Activated CD4-positive, alpha-beta T cell treated with anti-CD3 and anti-CD28 coated beads for 36 hours (primary cell): ENCODE measurements at regions of chr2 and their contacts with region 1.

Region 1: GRCh38 chr2:216013080-216013909 is at the start of gene MREG:
- DNase-seq: peak; percentile 94
- ATAC-seq: peak; percentile 70
- H3K4me3 Mint-ChIP-seq: peak within 1 kb of the TSS; percentile 88
- H3K27ac Mint-ChIP-seq: peak within 1 kb of the TSS; percentile 81
- H3K4me1 Mint-ChIP-seq: peaks cover 60% of the 10 kb centered on the region
- H3K27me3 Mint-ChIP-seq: no peaks in the 10 kb centered on the region
- total RNA-seq, gene MREG: 9.1 to 9.8 TPM

Region 2: GRCh38 chr2:214809751-214810564 is 1203.3 kb before region 1 on chr2:
- CTCF ChIA-PET with region 1: no interaction called
- POLR2A ChIA-PET with region 1: no interaction called
- intact Hi-C with region 1: loop called in 1 of 2 experiments (anchors 10 kb)
- DNase-seq: peak; percentile 100
- ATAC-seq: peak; percentile 89
- H3K4me3 Mint-ChIP-seq: peak overlapping the region; percentile 88
- H3K27ac Mint-ChIP-seq: peak overlapping the region; percentile 73
- H3K4me1 Mint-ChIP-seq: peaks cover 23% of the 10 kb centered on the region
- H3K27me3 Mint-ChIP-seq: peaks cover 3% of the 10 kb centered on the region

Region 3: DNA sequence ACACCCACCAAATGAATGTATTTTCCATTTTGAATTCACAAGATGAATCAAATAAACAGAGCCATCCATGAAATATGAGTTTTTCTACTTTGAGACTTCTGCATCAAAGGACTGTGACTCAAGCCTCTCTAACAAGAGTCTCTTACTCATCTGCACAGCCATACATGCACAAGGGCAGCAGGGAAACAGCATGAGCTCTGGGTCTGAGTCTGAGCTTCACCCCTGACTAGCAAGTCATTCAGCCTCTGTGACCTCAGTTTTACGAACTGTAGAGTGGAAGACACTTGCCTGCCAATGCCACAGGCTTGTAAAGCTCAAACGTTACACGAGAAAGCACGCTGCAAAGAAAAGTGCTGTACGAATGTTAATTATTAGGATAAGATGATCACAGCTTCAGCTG is 42.9 kb before region 1 on chr2:
- CTCF ChIA-PET with region 1: interaction called, 5 read pairs
- POLR2A ChIA-PET with region 1: interaction called, 4 read pairs
- intact Hi-C with region 1: loop called (anchors 2 kb)
- DNase-seq: peak; percentile 72
- ATAC-seq: peak; percentile 99
- H3K4me3 Mint-ChIP-seq: no peak overlapping the region
- H3K27ac Mint-ChIP-seq: peak overlapping the region; percentile 74
- H3K4me1 Mint-ChIP-seq: peaks cover 30% of the 10 kb centered on the region
- H3K27me3 Mint-ChIP-seq: no peaks in the 10 kb centered on the region

Region 4: DNA sequence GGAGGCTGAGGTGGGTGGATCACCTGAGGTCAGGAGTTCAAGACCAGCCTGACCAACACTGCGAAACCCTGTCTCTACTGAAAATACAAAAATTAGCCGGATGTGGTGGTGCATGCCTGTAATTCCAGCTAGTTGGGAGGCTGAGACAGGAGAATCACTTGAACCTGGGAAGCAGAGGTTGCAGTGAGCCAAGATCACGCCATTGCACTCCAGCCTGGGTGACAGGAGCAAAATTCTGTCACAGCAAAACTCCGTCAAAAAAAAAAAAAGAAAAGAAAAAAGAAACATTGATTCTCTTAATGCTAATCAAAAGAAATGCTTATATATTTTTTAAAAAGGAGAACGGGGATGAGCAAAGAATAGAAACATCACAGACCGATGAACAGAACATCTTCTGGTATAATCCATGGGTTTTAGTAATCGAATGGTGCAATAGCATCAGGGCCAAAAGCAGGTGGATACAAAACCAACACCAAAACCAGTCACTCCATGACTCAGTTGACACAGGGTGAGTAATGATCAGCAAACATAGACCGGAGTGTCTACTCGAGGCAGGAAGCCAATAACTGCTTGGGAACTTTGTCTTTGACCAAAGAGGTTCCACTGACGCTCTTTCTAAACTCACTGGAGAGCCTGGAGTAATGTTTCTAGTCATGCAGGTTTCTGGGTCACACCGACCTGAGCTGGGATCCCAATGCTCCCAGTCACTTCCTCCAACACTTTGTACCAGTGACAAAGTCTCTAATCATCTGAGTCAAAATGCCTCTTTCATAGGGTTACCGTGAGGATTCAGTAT is 31.0 kb before region 1 on chr2:
- CTCF ChIA-PET with region 1: interaction called, 4 read pairs
- POLR2A ChIA-PET with region 1: no interaction called
- intact Hi-C with region 1: loop called (anchors 1 kb)
- DNase-seq: peak; percentile 61
- ATAC-seq: peak; percentile 86
- H3K4me3 Mint-ChIP-seq: no peak overlapping the region
- H3K27ac Mint-ChIP-seq: no peak overlapping the region
- H3K4me1 Mint-ChIP-seq: peaks cover 32% of the 10 kb centered on the region
- H3K27me3 Mint-ChIP-seq: no peaks in the 10 kb centered on the region

Region 5: GRCh38 chr2:216245391-216245975 is 232.2 kb after region 1 on chr2:
- CTCF ChIA-PET with region 1: no interaction called
- POLR2A ChIA-PET with region 1: no interaction called
- intact Hi-C with region 1: no loop called
- DNase-seq: no peak
- ATAC-seq: no peak
- H3K4me3 Mint-ChIP-seq: no peak overlapping the region
- H3K27ac Mint-ChIP-seq: no peak overlapping the region
- H3K4me1 Mint-ChIP-seq: peaks cover 4% of the 10 kb centered on the region
- H3K27me3 Mint-ChIP-seq: no peaks in the 10 kb centered on the region

Region 6: GRCh38 chr2:217632043-217632442 is 1618.7 kb after region 1 on chr2:
- CTCF ChIA-PET with region 1: no interaction called
- POLR2A ChIA-PET with region 1: no interaction called
- intact Hi-C with region 1: no loop called
- DNase-seq: no peak
- ATAC-seq: no peak
- H3K4me3 Mint-ChIP-seq: no peak overlapping the region
- H3K27ac Mint-ChIP-seq: no peak overlapping the region
- H3K4me1 Mint-ChIP-seq: no peaks in the 10 kb centered on the region
- H3K27me3 Mint-ChIP-seq: no peaks in the 10 kb centered on the region